Heart left ventricle (tissue), 16 donors: ENCODE measurements at regions of chr7 and their contacts with region 1.

Region 1: GRCh38 chr7:83643756-83644155 is 5.2 kb downstream of the SEMA3E start:
- DNase-seq: no peak
- ATAC-seq: no peak
- H3K4me3 ChIP-seq: no peak overlapping the region
- H3K27ac ChIP-seq: no peak overlapping the region
- H3K4me1 ChIP-seq: peaks cover 0 to under 1% (median 0%) of the 10 kb centered on the region in 12 donors
- H3K27me3 ChIP-seq: peaks cover 0 to 14% (median 0%) of the 10 kb centered on the region in 9 donors
- CTCF ChIP-seq: no peak
- POLR2A ChIP-seq: no peak

Region 2: DNA sequence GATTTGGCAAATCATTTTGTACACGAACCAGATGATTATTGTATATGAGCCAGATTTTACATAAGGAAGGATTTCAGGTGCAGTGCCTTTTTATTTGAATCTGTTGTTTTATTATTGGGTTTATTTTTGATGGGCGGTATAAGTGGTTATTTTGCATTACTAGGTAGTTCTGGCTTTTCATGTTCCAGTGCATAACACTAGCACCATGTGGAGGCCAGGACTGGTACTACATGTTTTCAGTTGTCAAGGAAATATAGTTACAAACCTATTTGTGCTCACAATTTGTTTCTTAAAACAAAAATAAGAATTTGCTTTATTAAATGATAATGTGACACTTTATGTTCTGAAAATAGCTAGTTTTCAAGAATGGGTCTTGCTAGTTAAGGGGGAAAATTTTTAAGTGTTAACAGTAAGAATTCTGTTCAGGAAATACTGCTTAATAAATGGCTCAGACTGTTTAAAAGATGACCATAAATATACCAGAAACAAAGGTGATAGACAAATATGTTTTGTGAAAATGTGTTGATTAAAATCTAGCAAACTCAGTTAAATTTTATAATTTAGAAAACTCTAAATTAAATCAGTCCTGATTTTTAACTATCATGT is 12.3 kb after region 1 on chr7:
- intact Hi-C with region 1: no loop called
- DNase-seq: no peak
- ATAC-seq: peak in 1 of 4 donors; percentile 41
- H3K4me3 ChIP-seq: no peak overlapping the region
- H3K27ac ChIP-seq: no peak overlapping the region
- H3K4me1 ChIP-seq: no peaks in the 10 kb centered on the region
- H3K27me3 ChIP-seq: no peaks in the 10 kb centered on the region
- CTCF ChIP-seq: peak; percentile 38 to 69 (median 56)
- POLR2A ChIP-seq: no peak

Region 3: DNA sequence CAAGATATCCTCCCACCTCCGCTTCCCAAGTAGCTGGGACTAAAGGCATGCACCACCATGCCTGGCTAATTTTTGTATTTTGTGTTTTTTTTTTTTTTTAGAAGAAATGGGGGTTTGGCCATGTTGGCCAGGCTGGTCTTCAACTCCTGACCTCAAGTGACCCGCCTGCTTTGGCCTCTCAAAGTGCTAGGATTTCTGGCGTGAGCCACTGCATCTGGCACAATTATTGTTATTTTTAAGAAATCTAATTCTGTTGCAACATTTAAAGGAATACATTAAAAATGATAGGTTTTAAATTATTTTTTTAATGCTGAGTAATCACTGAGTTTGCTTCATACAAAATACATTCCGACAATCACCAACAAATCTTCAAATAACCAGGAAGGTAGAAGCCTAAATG is 183.3 kb after region 1 on chr7:
- intact Hi-C with region 1: loop called in 1 of 10 experiments (anchors 5 kb)
- DNase-seq: no peak
- ATAC-seq: no peak
- H3K4me3 ChIP-seq: no peak overlapping the region
- H3K27ac ChIP-seq: no peak overlapping the region
- H3K4me1 ChIP-seq: no peaks in the 10 kb centered on the region
- H3K27me3 ChIP-seq: no peaks in the 10 kb centered on the region
- CTCF ChIP-seq: no peak
- POLR2A ChIP-seq: no peak